Activated CD4-positive, alpha-beta T cell treated with anti-CD3 and anti-CD28 coated beads, Interleukin-2, amount 10 ng/mL, durations not matched to agents 24 days and 14 days (primary cell): ENCODE measurements at regions of chr11 and their contacts with region 1.

Region 1: DNA sequence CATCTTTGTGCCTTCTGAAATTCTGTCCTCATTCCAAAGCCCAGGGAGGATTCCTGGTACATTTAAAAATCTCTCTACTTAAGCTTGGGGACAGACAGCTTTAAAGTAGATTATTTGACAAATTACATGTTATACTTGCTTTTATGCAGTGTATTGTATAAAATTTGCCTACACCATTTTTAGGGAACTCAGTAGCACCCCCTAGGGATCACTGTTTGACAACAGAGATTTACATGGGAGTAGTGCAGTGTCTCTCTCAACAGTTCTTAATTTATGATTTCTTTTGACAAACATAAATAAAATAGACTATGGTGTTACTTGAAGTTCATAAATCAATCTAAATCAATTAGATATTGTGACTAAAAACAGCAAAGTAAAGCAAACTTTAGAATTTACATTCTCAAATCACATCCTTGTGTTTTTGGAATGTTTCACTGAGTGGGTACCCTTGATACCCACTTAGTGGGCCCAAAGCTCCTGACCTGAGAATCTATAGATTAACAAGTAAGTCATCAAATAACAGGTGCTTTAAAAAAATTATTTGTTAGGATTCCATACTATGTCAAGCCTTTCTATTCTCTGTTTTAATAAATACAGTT is 428.8 kb downstream of the DYNC2H1 start:
- DNase-seq: no peak
- H3K4me3 Mint-ChIP-seq: no peak overlapping the region
- H3K27ac Mint-ChIP-seq: no peak overlapping the region
- H3K4me1 Mint-ChIP-seq: no peaks in the 10 kb centered on the region
- H3K27me3 Mint-ChIP-seq: peaks cover under 1% of the 10 kb centered on the region

Region 2: DNA sequence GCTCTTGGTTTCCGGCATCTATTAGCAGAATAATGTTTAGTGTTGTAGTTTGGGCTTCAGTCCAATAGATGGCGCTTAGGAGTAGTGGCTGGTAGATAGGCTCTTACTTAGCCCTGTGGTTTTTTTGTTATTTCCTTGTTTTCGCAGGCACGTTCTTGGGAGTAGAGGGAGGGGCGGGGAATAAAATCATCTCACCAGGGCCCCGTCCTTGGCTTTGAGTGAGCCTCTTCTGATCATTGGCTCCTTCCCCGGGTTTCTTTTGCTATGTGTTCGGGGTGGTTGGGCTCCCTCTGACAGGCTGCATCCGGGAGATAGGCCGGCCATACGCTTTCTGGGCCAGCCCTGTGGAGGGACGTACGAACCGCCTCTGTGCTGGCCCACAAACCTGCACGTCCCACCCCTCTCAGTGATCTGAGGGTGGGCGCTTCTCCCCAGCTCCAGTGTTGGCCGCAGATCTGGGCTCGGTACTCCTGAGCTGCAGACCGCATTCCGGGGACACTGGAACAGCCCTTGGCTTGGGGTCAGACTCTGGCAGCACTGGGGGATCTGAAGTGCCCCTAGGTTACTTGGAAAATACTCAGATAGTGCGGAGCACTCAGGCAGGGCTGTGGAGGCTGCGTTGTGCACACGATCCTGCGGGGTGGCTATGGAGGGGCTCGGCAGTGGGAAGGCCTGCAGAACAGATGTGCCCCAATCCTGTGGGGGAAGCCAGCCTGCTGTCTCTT is 211.8 kb before region 1 on chr11:
- intact Hi-C with region 1: loop called (anchors 5 kb)
- DNase-seq: peak; percentile 81
- H3K4me3 Mint-ChIP-seq: no peak overlapping the region
- H3K27ac Mint-ChIP-seq: no peak overlapping the region
- H3K4me1 Mint-ChIP-seq: peaks cover 4% of the 10 kb centered on the region
- H3K27me3 Mint-ChIP-seq: peaks cover 6% of the 10 kb centered on the region

Region 3: GRCh38 chr11:103648670-103649402 is 110.8 kb after region 1 on chr11:
- intact Hi-C with region 1: no loop called
- DNase-seq: no peak
- H3K4me3 Mint-ChIP-seq: no peak overlapping the region
- H3K27ac Mint-ChIP-seq: no peak overlapping the region
- H3K4me1 Mint-ChIP-seq: no peaks in the 10 kb centered on the region
- H3K27me3 Mint-ChIP-seq: no peaks in the 10 kb centered on the region